HEK293 (cell line): ENCODE measurements at regions of chr2 and their contacts with region 1.

Region 1: DNA sequence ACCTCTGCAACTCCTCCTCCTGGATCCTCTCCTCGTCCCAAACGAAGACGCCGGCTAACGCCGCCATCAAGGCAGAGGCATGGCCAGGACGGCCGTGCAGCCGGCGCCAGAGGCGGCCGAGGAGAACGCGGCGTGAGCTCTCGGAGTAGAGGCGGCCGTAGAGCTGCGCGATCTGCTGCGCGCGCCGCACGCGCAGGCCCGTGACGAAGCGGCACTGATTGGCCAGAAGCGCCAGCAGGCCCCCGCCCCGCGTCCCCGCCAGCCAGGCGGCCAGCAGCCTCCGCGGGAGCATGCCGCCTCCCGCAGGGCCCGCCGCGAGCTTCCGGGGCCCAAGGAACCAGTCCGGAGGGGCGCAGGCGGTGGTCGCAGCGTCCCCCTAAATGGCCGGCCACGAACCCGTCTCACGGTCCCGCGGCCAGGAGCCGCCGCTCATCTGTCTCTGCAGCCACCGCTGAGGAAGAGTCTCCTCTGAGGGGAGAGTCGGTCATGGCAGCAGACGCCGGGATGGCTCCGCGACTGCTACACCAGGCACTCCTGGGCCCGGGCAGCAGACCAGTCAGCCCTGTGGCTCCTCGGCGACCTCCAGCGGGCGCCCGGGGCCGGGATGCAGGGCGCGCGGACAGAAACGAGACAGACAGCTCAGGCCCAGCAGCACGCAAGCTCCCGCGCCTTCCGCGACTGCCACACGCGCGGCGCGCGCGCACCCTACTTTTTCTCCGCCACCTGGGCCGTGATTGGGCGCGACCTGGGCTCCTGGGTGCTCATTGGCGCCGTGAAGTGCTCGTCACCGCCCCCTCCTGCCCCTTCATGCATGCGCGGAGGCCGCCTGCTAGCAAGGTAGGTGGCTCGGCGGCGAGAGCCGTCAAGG is at the start of gene STARD7:
- H3K4me3 ChIP-seq: peak within 1 kb of the TSS; percentile 91
- H3K27ac ChIP-seq: peak within 1 kb of the TSS; percentile 98
- H3K4me1 ChIP-seq: peaks cover 22% of the 10 kb centered on the region; the same call in 1 of the 2 replicates
- CTCF ChIP-seq: peak; percentile 90

Region 2: GRCh38 chr2:96195410-96196066 is 12.8 kb before region 1 on chr2:
- CTCF ChIA-PET with region 1: no interaction called
- POLR2A ChIA-PET with region 1: interaction called, 10 read pairs
- H3K4me3 ChIP-seq: no peak overlapping the region
- H3K27ac ChIP-seq: no peak overlapping the region
- H3K4me1 ChIP-seq: peaks cover 10% of the 10 kb centered on the region
- CTCF ChIP-seq: no peak

Region 3: GRCh38 chr2:96260404-96261260 is 52.3 kb after region 1 on chr2:
- CTCF ChIA-PET with region 1: interaction called, 5 read pairs
- POLR2A ChIA-PET with region 1: interaction called, 30 read pairs
- H3K4me3 ChIP-seq: no peak overlapping the region
- H3K27ac ChIP-seq: peak overlapping the region; percentile 25
- H3K4me1 ChIP-seq: peaks cover 17% of the 10 kb centered on the region
- CTCF ChIP-seq: peak; percentile 72

Region 4: GRCh38 chr2:96265840-96266679 is 57.7 kb after region 1 on chr2 and contains the starts of genes CIAO1 and TMEM127:
- CTCF ChIA-PET with region 1: interaction called, 5 read pairs
- POLR2A ChIA-PET with region 1: interaction called, 30 read pairs
- H3K4me3 ChIP-seq: peak within 1 kb of the TSS; percentile 95
- H3K27ac ChIP-seq: peak within 1 kb of the TSS; percentile 73
- H3K4me1 ChIP-seq: 0 out of 2 replicates have a peak, but pooled peaks cover 3% of the 10 kb centered on the region
- CTCF ChIP-seq: peak; percentile 91